ENCODE measurements at regions of chr6 and their contacts with region 1.

Region 1: GRCh38 chr6:30066577-30067459 is at the start of gene PPP1R11:
- DNase-seq: peak; percentile 99
- H3K4me3 Mint-ChIP-seq: peak within 1 kb of the TSS; percentile 97
- H3K27ac Mint-ChIP-seq: peak within 1 kb of the TSS; percentile 99
- H3K4me1 Mint-ChIP-seq: peaks cover 50% of the 10 kb centered on the region
- H3K27me3 Mint-ChIP-seq: peaks cover 11% of the 10 kb centered on the region
- total RNA-seq, gene PPP1R11: 69.8 and 71.0 TPM in 2 replicates

Region 2: DNA sequence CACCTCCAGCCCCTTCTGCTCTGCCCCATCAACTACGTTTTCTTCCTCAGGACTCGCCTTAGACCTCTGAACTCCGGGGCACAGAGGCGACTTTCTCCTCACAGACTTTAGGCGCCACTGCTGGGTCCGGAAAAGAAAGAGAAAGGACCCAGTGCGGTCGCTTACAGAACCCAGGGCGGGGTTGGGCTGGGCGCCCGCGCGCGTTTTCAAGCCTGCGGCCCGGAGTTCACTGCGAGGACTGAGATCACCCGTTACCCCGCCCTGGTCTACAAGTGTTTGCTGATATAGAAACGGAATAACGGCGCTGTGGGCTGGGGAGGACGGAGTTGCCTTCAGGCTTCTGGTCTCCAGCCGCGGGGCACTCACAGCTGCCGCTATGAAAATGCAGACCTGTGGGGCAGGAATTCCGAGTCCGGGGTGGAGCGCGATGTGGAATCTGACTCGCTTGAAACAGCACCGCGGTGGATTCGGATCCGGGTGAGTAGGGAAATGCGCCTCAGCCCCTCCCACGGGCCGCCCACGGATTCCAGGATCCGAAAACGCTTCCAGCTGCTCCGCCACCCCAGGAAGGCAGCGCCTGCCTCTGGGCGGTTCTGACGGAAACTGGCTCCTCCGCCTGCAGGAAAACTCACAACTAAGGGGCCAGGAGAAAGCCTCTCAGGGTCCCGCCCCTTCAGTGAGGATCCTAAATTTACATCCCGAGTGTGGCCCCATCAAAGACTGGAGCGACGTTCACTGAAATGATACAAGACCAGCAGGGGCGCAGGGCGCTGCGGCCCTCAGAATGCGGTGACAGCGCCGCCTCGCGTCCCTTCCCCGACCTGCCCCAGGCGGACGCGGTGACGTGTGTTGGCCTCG is 314.1 kb before region 1 on chr6:
- intact Hi-C with region 1: loop called (anchors 2 kb)
- DNase-seq: peak; percentile 79
- H3K4me3 Mint-ChIP-seq: peak overlapping the region; percentile 93
- H3K27ac Mint-ChIP-seq: peak overlapping the region; percentile 91
- H3K4me1 Mint-ChIP-seq: peaks cover 65% of the 10 kb centered on the region
- H3K27me3 Mint-ChIP-seq: no peaks in the 10 kb centered on the region

Region 3: GRCh38 chr6:29926413-29927274 is 140.2 kb before region 1 on chr6:
- intact Hi-C with region 1: loop called (anchors 2 kb)
- DNase-seq: peak; percentile 79
- H3K4me3 Mint-ChIP-seq: peak overlapping the region; percentile 92
- H3K27ac Mint-ChIP-seq: peak overlapping the region; percentile 98
- H3K4me1 Mint-ChIP-seq: peaks cover 51% of the 10 kb centered on the region
- H3K27me3 Mint-ChIP-seq: peaks cover 4% of the 10 kb centered on the region

Region 4: GRCh38 chr6:30102970-30103874 is 36.4 kb after region 1 on chr6:
- intact Hi-C with region 1: loop called (anchors 1 kb)
- DNase-seq: peak; percentile 79
- H3K4me3 Mint-ChIP-seq: peak overlapping the region; percentile 82
- H3K27ac Mint-ChIP-seq: peak overlapping the region; percentile 51
- H3K4me1 Mint-ChIP-seq: peaks cover 43% of the 10 kb centered on the region
- H3K27me3 Mint-ChIP-seq: peaks cover 55% of the 10 kb centered on the region

Region 5: DNA sequence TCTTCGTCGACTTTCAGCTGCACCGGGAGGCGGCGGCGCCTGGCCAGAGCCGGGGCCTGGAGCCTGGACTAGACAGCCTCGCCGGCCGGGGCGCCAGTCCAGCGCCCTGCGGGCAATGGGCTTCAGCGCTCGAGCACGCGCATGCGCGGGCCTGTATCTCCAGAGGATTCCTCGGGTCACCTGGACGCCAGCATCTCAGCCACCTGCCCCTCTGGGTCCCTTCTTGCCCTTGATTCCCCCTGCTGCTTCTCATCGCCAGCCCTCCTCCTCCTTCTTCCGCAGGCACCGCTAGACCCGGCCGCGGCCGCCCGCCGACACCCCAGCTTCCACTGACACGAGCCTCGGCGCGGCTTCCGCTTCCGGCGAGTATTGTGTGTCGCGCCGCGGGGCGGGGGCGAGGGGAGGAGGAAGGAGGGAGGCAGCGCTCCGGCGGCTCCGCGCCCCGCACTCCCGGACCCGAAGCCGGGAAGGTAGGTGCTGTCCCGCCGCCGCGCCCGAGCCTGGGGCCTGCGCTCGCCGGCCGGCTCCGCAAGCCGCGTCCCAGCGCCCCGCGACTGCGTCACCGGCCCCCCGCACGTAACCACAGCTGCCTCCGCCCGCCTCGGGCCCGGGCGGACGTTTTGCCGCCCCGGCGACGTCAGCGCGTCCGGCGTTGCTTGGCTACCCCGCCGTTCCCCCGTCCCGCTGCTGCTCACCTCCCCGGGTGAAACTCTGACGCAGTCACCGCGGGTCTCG is 259.9 kb after region 1 on chr6 and contains the start of gene TRIM39:
- intact Hi-C with region 1: loop called (anchors 1 kb)
- DNase-seq: peak; percentile 85
- H3K4me3 Mint-ChIP-seq: peak within 1 kb of the TSS; percentile 99
- H3K27ac Mint-ChIP-seq: peak within 1 kb of the TSS; percentile 100
- H3K4me1 Mint-ChIP-seq: peaks cover 54% of the 10 kb centered on the region
- H3K27me3 Mint-ChIP-seq: no peaks in the 10 kb centered on the region
- total RNA-seq, gene TRIM39: 14.2 and 15.6 TPM in 2 replicates

Region 6: DNA sequence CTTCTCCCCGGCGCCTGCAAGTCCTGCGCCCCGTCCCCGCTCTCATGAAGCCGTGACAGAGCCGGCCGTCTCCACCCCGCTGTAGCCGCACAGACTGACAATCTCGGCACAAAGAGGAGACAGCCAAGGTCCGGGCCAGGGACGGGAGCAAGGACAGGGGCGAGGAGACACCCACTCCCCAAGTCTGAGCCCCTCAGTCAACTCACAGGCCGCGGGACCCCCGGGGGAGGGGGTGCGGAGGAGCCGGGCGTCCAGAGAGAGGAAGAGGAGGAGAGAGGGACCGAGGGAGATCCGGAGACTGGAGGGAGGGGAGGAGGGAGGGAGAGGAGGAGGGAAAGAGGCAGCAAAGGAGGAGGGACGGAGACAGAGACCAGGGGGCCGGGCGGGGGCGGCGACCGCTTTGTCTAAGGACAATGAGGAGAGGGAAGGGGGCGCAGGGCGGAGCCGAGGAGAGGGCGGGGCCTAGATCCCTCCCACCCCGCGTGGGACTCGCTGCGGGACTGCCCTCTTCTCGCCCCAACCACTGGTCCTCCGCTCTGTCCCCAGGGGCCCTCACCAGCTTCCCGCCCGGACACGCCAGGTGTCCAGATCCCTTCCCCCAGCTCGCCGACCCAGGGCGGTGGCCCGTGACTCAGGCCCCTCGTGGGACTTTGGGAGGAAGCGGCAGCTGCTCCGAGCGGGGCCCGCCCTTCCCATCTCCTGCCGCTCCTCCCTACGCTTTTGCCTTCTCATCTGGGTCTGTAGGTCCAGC is 620.3 kb after region 1 on chr6:
- intact Hi-C with region 1: loop called (anchors 10 kb)
- DNase-seq: peak; percentile 83
- H3K4me3 Mint-ChIP-seq: peak overlapping the region; percentile 94
- H3K27ac Mint-ChIP-seq: peak overlapping the region; percentile 87
- H3K4me1 Mint-ChIP-seq: peaks cover 50% of the 10 kb centered on the region
- H3K27me3 Mint-ChIP-seq: no peaks in the 10 kb centered on the region

Measured in activated T-helper 1 cell treated with anti-CD3 and anti-CD28 coated beads, Interleukin-12 subunit alpha, Interleukin-12 subunit beta, Interleukin-2, Interleukin-4 antibody, amounts not matched to agents 30 ng/mL and 10 ng/mL and 1 ng/mL, durations not matched to agents 14 hours and 24 hours and 36 hours (primary cell).